Right ventricle myocardium superior (tissue), 1 donor: ENCODE measurements at regions of chr9 and their contacts with region 1.

Region 1: GRCh38 chr9:34376596-34377403 is at the start of gene MYORG:
- DNase-seq: peak; percentile 96
- ATAC-seq: peak; percentile 82
- total RNA-seq, gene MYORG: 8.1 TPM

Region 2: GRCh38 chr9:34126207-34127034 is 250.4 kb before region 1 on chr9 and contains the start of gene DCAF12:
- intact Hi-C with region 1: loop called (anchors 10 kb)
- DNase-seq: peak; percentile 94
- ATAC-seq: peak; percentile 99
- total RNA-seq, gene DCAF12: 14.8 TPM

Region 3: GRCh38 chr9:34332076-34332964 is 44.5 kb before region 1 on chr9:
- intact Hi-C with region 1: loop called (anchors 2 kb)
- DNase-seq: no peak
- ATAC-seq: no peak

Region 4: GRCh38 chr9:34475097-34475496 is 98.3 kb after region 1 on chr9:
- intact Hi-C with region 1: no loop called
- DNase-seq: no peak
- ATAC-seq: no peak

Region 5: GRCh38 chr9:34744295-34745221 is 367.8 kb after region 1 on chr9:
- intact Hi-C with region 1: no loop called
- DNase-seq: peak; percentile 54
- ATAC-seq: peak; percentile 65